SK-N-SH (cell line): ENCODE measurements at regions of chr19 and their contacts with region 1.

Region 1: DNA sequence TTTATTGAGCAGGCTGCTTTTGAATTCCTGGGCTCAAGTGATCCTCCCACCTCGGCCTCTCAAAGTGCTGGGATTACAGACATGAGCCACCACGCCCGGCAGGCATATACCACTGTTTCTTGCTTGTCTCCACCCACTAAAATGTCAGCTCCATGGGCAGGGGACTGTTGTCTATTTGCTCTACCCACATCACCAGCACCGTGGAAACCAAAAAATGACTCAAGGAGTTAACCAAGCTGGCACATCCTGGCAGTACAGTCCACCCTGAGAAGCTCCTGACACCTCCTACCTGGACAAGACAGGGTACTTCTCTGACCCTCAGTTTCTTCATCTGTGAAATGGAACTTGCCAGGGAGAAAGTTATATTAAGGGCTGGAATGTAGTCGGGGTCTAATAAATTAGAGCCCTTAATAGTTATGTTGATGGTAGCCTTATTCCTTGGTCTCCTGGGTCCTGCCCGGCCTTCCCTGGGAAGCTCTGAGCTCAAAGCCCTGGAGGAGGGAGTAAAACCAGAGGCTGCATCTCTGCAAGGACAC is 13.9 kb downstream of the RDH8 start:
- DNase-seq: no peak
- H3K4me3 ChIP-seq: peak overlapping the region in 1 of 2 experiments; percentile 30; a peak in 1 of 4 replicates
- H3K27ac ChIP-seq: no peak overlapping the region
- H3K4me1 ChIP-seq: peaks cover 0 to 4% of the 10 kb centered on the region in 2 experiments; a peak in 1 of 4 replicates
- H3K27me3 ChIP-seq: peaks cover 63% of the 10 kb centered on the region
- CTCF ChIP-seq: no peak
- EP300 ChIP-seq: no peak
- RAD21 ChIP-seq: no peak

Region 2: DNA sequence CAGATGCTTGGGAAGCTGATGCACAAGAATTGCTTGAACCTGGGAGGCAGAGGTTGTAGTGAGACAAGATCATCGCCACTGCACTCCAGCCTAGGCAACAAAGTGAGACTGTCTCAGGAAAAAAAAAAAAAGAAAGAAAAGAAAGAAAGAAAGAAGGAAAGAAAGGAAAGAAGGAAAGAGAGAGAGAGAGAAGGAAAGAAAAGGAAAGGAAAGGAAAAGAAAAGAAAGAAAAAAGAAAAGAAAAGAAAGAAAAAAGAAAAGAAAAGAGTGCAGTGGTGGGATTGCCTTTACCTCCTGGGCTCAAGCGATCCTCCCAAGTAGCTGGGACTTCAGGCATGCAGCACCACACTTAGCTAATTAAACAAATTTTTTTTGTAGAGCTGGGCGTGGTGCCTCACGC is 103.8 kb before region 1 on chr19:
- CTCF ChIA-PET with region 1: interaction called, 21 read pairs
- POLR2A ChIA-PET with region 1: no interaction called
- DNase-seq: no peak
- H3K4me3 ChIP-seq: no peak overlapping the region
- H3K27ac ChIP-seq: no peak overlapping the region
- H3K4me1 ChIP-seq: no peaks in the 10 kb centered on the region
- H3K27me3 ChIP-seq: no peaks in the 10 kb centered on the region
- CTCF ChIP-seq: no peak
- EP300 ChIP-seq: no peak
- RAD21 ChIP-seq: no peak

Region 3: GRCh38 chr19:9939301-9939913 is 87.8 kb before region 1 on chr19:
- CTCF ChIA-PET with region 1: interaction called, 142 read pairs
- POLR2A ChIA-PET with region 1: no interaction called
- DNase-seq: no peak
- H3K4me3 ChIP-seq: no peak overlapping the region
- H3K27ac ChIP-seq: no peak overlapping the region
- H3K4me1 ChIP-seq: peaks cover 4 to 15% of the 10 kb centered on the region in 2 experiments; a peak in 3 of 4 replicates
- H3K27me3 ChIP-seq: peaks cover 23% of the 10 kb centered on the region; the same call in 1 of the 2 replicates
- CTCF ChIP-seq: no peak
- EP300 ChIP-seq: no peak
- RAD21 ChIP-seq: no peak

Region 4: DNA sequence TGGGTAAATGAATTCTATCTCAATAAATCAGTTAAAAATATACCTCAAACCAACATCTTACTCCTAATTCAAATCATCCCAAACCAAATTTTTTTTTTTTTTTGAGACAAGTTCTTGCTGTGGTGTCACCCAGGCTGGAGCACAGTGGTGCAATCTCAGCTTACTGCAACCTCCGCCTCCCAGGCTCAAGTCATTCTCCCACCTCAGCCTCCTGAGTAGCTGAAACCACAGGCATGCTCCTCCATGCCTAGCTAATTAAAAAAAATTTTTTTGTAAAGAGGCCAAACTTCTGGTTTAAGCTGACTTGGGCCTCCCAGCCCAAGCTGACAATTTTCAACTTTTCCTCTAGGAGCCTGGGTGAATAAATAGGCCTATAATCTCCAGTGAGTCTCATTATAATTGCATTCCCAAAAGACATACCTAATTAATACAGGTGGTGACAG is 68.8 kb before region 1 on chr19:
- CTCF ChIA-PET with region 1: interaction called, 16 read pairs
- POLR2A ChIA-PET with region 1: no interaction called
- DNase-seq: no peak
- H3K4me3 ChIP-seq: no peak overlapping the region
- H3K27ac ChIP-seq: no peak overlapping the region
- H3K4me1 ChIP-seq: no peaks in the 10 kb centered on the region
- H3K27me3 ChIP-seq: peaks cover 33% of the 10 kb centered on the region; the same call in 1 of the 2 replicates
- CTCF ChIP-seq: no peak
- EP300 ChIP-seq: no peak
- RAD21 ChIP-seq: no peak

Region 5: GRCh38 chr19:10000171-10000826 is 26.9 kb before region 1 on chr19:
- CTCF ChIA-PET with region 1: interaction called, 28 read pairs
- POLR2A ChIA-PET with region 1: no interaction called
- DNase-seq: peak; percentile 89
- H3K4me3 ChIP-seq: no peak overlapping the region
- H3K27ac ChIP-seq: no peak overlapping the region
- H3K4me1 ChIP-seq: no peaks in the 10 kb centered on the region; a peak in 1 of 4 replicates
- H3K27me3 ChIP-seq: peaks cover 24% of the 10 kb centered on the region
- CTCF ChIP-seq: peak; percentile 87
- EP300 ChIP-seq: no peak
- RAD21 ChIP-seq: peak; percentile 78

Region 6: DNA sequence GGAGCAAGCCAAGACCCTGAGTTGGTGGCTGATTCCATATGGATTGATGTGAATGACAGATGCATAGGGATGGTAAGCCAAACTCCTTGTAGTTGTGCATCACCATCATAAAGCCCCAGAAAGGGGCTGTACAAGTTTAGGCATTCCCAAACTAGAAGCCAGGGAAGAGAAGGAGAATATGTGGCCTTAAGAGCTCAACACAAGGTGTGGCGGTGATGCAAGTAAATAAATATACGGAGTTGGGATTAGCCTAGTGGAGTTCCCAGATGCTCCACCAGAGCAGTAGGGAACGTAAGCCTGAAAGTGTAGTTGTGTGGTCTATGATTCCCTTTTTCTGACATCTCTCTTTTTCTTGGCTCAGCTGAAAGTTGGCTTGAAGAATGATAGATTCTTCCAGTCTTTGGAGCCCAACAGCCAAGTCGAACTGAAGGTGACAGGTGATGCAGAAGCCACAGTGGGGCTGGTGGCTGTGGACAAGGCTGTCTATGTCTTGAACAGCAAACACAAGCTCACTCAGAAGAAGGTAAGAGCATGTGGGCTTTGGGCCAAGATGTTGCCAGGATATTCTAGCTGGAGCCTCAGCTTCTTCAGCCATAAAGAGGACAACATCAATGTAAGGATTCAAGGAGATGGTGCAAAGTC is 16.2 kb after region 1 on chr19:
- CTCF ChIA-PET with region 1: interaction called, 21 read pairs
- POLR2A ChIA-PET with region 1: no interaction called
- DNase-seq: no peak
- H3K4me3 ChIP-seq: no peak overlapping the region; a peak in 1 of 4 replicates
- H3K27ac ChIP-seq: no peak overlapping the region
- H3K4me1 ChIP-seq: no peaks in the 10 kb centered on the region
- H3K27me3 ChIP-seq: no peaks in the 10 kb centered on the region; the same call in 1 of the 2 replicates
- CTCF ChIP-seq: no peak
- EP300 ChIP-seq: no peak
- RAD21 ChIP-seq: no peak